ENCODE measurements at regions of chr17 and their contacts with region 1.

Region 1: DNA sequence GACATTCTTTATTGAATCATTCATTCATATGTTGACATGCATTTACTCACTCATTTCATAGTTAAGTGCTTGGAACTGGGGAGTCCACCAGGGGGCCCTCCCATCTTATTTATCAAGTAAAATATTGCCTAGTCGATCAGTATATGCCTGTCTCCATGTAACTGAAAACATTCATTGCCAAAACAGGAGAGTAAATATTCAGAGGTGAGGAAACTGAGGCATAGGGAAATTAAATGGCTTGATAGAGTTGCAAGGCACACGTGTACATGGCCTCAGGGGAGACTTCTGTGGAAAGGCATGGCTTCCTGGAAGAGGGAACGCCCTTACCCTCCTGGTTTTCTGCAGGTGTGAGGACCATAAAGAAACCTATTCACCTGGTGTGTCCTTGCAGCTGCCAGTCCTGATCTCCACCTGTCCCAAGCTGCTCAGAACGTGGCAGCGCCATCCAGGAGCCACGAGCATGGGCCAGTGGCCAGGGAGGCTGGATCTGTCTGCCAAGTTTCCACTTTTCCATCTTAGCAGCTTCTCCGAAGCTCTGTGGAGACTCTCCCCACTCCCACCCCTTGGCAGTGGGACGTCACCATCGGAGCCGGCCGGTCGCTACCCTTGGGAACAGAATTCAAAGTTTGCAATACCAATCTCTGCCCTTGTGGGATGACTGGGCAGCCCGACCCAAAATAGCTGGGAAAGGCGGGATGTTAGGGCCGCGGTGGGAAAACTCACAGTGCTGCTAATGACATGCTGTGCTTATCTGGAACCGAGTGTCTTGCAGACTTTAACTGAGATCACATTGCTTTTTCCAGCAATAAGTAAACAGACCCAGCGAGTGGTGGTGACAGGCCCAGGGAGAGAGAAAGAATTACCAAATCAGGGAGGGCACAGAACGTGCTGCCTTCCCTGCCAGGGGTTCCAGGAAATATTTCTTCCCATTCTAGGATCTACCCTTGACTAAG is 4.1 kb upstream of the C1QTNF1 start:
- DNase-seq: peak; percentile 53
- H3K4me3 ChIP-seq: no peak overlapping the region
- H3K27ac ChIP-seq: no peak overlapping the region
- H3K4me1 ChIP-seq: peaks cover 43% of the 10 kb centered on the region
- H3K27me3 ChIP-seq: no peaks in the 10 kb centered on the region
- CTCF ChIP-seq: peak; percentile 68 to 77

Region 2: DNA sequence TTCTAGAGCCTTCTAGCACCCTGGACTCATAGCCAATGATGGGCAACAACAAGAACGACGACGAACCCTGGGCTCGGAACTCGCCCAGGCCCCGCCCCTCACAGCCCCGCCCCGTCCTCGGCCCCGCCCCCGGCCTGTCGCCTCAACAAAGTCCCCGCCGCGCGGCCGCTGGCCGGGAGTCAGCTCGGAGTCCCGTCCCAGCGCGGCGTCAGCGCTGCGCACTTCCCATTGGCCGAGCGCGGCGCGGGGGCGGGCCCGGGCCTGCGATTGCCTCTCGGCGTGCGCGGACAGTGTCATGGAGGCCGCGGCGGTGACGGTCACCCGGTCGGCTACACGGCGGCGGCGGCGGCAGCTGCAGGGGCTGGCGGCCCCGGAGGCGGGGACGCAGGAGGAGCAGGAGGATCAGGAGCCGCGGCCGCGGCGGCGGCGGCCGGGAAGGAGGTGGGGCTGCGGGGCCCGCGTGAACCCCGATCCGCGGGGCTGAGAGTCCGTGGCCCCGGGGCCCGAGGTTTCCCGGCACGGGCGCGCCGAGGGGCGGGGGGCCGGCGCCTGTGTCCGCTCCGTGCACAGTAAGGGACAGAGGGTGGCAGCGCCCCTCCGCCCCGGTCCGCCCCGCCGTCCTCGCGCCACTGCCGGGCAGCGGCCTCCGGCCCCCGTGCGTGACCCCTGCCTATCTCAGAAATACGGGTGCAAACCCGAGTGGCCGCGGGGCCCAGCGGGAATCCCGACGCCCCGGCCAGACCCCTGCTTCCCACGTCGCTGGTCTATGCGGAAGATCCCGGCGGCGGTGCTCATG is 54.9 kb after region 1 on chr17 and contains the start of gene ENGASE:
- CTCF ChIA-PET with region 1: no interaction called
- dilution Hi-C with region 1: loop called (anchors 5 kb)
- in situ Hi-C with region 1: no loop called
- intact Hi-C with region 1: no loop called
- DNase-seq: peak; percentile 87
- H3K4me3 ChIP-seq: peak within 1 kb of the TSS; percentile 70 to 80 (median 73)
- H3K27ac ChIP-seq: peak within 1 kb of the TSS; percentile 36
- H3K4me1 ChIP-seq: peaks cover 4% of the 10 kb centered on the region
- H3K27me3 ChIP-seq: no peaks in the 10 kb centered on the region
- CTCF ChIP-seq: no peak
- total RNA-seq, gene ENGASE: 11.8 to 24.2 TPM

Region 3: DNA sequence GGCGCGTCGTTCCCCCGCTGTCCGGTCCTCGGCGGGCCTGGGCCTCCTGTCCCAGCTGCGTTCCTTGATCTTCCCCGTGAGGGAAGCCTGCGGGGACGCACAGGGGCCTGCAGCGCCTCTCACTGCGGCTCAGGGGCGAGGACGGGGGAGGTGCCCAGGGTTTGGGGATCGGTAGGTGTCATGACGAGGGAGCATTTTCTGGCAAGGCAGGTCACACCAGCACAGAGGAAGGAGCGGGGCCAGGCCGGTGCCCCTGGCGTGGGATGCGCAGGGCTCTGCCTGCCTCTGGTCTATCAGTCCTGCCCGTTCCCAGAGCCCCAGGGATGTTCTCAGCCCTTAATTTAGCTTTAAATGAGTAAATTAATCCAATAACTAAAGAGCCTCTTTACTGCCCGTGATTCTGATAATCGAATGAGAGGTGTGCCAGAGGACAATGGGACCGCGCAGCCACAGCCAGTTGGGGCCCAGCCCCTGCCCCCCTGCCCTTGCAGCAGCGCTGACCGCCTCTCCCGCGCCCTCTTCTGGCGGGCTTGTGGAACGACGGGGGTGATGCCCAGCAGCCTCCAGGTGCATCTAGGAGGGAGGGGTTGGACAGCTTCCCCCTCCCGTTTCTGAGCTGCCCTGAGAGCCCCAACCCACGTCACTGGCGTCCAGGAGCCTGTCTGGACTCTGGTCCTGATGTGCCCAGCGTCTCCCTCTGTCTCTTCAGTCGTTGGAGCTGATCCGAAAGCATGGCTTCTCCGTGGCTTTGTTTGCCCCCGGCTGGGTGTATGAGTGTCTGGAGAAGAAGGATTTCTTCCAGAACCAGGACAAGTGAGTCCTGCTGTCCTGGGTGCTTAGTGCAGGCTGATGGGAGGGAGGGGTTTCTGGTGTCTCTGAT is 62.6 kb after region 1 on chr17:
- CTCF ChIA-PET with region 1: no interaction called
- dilution Hi-C with region 1: no loop called
- in situ Hi-C with region 1: no loop called
- intact Hi-C with region 1: loop called (anchors 1 kb)
- DNase-seq: no peak
- H3K4me3 ChIP-seq: no peak overlapping the region
- H3K27ac ChIP-seq: no peak overlapping the region
- H3K4me1 ChIP-seq: no peaks in the 10 kb centered on the region
- H3K27me3 ChIP-seq: no peaks in the 10 kb centered on the region
- CTCF ChIP-seq: peak; percentile 61 to 90

Region 4: GRCh38 chr17:79087428-79088143 is 67.7 kb after region 1 on chr17:
- CTCF ChIA-PET with region 1: no interaction called
- dilution Hi-C with region 1: no loop called
- in situ Hi-C with region 1: no loop called
- intact Hi-C with region 1: loop called (anchors 1 kb)
- DNase-seq: peak; percentile 21
- H3K4me3 ChIP-seq: no peak overlapping the region
- H3K27ac ChIP-seq: no peak overlapping the region
- H3K4me1 ChIP-seq: no peaks in the 10 kb centered on the region
- H3K27me3 ChIP-seq: no peaks in the 10 kb centered on the region
- CTCF ChIP-seq: peak; percentile 88

Region 5: GRCh38 chr17:79147746-79148506 is 128.0 kb after region 1 on chr17:
- CTCF ChIA-PET with region 1: no interaction called
- dilution Hi-C with region 1: no loop called
- in situ Hi-C with region 1: no loop called
- intact Hi-C with region 1: no loop called
- DNase-seq: no peak
- H3K4me3 ChIP-seq: no peak overlapping the region
- H3K27ac ChIP-seq: no peak overlapping the region
- H3K4me1 ChIP-seq: no peaks in the 10 kb centered on the region
- H3K27me3 ChIP-seq: peaks cover 3% of the 10 kb centered on the region
- CTCF ChIP-seq: no peak

Measured in mammary epithelial cell (primary cell).